ENCODE measurements at regions of chr10 and their contacts with region 1.

Region 1: GRCh38 chr10:128069351-128070051 is 56.7 kb downstream of the MKI67 start:
- DNase-seq: peak; percentile 71

Region 2: GRCh38 chr10:127906548-127907377 is 162.7 kb before region 1 on chr10 and contains the start of gene PTPRE:
- in situ Hi-C with region 1: no loop called
- DNase-seq: peak; percentile 38

Region 3: GRCh38 chr10:128147064-128147463 is 77.6 kb after region 1 on chr10:
- in situ Hi-C with region 1: loop called (anchors 10 kb)
- DNase-seq: no peak

Measured in KBM-7 (cell line).